Endothelial cell of umbilical vein (primary cell): ENCODE measurements at regions of chr19 and their contacts with region 1.

Region 1: GRCh38 chr19:55467236-55468053 is 2.9 kb upstream of the C19orf85 start:
- DNase-seq: peak; percentile 38
- H3K4me3 ChIP-seq: no peak overlapping the region
- H3K27ac ChIP-seq: no peak overlapping the region
- H3K4me1 ChIP-seq: no peaks in the 10 kb centered on the region
- H3K27me3 ChIP-seq: no peaks in the 10 kb centered on the region
- CTCF ChIP-seq: peak; percentile 97 to 99
- POLR2A ChIP-seq: no peak

Region 2: DNA sequence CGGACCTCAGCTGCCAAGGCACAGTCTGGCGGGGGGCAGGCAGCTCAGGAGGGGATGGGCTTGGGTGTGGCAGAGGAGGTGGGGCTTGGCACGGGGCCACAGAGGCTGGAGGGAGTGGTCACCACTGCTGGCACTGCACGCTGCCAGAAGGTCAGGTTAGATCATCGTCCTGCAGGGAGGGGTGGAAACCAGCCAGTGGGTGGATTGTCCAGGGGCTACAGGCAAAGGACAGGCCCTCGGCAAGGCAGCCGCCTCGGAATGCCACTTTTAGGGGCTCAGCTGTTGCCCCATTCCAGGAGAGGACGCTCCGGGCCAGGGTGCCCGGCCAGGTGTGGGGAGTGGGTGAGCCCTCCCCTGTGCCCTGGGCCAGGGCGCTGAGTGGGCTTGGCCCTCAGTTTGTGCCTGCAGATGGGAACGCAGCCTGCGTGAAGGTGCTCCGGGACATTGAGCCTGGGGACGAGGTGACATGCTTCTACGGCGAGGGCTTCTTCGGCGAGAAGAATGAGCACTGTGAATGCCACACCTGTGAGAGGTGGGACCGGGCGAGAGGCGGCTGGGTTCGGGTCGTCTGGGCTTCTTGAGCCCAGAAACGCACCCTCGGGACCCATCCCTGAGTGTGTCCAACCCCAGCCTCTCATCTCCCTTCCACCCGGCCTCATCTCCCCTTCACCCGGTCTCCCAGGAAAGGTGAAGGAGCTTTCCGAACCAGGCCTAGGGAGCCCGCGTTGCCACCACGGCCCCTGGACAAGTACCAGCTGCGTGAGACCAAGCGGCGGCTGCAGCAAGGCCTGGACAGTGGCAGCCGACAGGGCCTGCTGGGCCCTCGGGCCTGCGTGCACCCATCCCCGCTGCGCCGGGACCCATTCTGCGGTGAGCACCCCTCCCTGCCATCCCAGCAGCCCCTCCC is 121.4 kb before region 1 on chr19:
- CTCF ChIA-PET with region 1: no interaction called
- POLR2A ChIA-PET with region 1: no interaction called
- dilution Hi-C with region 1: no loop called
- intact Hi-C with region 1: no loop called
- DNase-seq: no peak
- H3K4me3 ChIP-seq: no peak overlapping the region
- H3K27ac ChIP-seq: no peak overlapping the region
- H3K4me1 ChIP-seq: no peaks in the 10 kb centered on the region
- H3K27me3 ChIP-seq: no peaks in the 10 kb centered on the region
- CTCF ChIP-seq: no peak
- POLR2A ChIP-seq: no peak

Region 3: GRCh38 chr19:55452749-55453346 is 14.6 kb before region 1 on chr19:
- CTCF ChIA-PET with region 1: interaction called, 13 read pairs
- POLR2A ChIA-PET with region 1: no interaction called
- dilution Hi-C with region 1: no loop called
- intact Hi-C with region 1: no loop called
- DNase-seq: peak; percentile 59
- H3K4me3 ChIP-seq: no peak overlapping the region
- H3K27ac ChIP-seq: no peak overlapping the region
- H3K4me1 ChIP-seq: no peaks in the 10 kb centered on the region
- H3K27me3 ChIP-seq: peaks cover 11 to 21% of the 10 kb centered on the region in 2 experiments
- CTCF ChIP-seq: no peak
- POLR2A ChIP-seq: no peak

Region 4: DNA sequence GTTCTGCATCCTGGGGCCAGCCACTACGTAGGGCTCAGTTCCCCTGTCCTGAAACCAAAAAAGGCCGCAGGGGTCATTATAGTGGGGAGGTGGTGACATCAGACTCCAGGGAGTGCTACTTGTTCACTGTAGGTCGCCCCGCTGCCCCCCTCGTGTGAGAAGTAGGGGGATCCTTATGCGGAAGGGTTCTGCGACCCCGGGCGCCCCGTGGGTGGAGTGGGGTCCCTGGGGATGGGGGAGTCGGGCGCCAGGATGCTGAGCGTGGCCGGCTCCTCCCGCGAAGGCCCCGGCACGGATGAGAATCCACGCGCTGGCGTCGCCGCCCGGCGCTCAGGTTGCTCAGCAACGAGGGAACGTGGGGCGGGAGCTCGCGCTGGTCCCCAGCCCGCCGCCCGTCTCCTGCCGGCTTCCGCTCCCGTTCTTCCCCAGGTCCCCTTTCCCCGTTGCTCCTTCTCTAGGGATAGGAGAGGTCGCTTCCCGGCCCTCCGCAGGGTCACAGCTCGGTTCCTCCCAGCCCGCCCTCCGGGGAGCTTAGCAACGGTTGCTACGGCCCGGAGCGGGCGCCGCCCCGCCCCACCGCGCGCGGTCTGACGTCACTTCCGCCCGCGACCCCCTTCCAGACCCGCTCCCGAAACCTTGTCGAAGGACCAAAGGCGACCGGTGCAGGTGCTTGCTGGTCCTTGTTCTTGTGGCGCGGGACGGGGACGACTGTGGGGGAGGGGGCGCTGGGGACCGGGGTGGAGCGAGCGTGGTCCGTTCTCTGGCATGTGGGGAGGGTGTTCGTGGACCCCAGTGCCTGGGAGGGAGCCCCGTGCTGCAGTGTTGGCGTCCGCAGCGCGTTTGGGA is 17.4 kb after region 1 on chr19 and contains the start of gene NAT14:
- CTCF ChIA-PET with region 1: interaction called, 71 read pairs
- POLR2A ChIA-PET with region 1: no interaction called
- dilution Hi-C with region 1: no loop called
- intact Hi-C with region 1: loop called (anchors 2 kb)
- DNase-seq: peak; percentile 61
- H3K4me3 ChIP-seq: peak within 1 kb of the TSS; percentile 32 to 63 (median 63)
- H3K27ac ChIP-seq: peak within 1 kb of the TSS; percentile 92
- H3K4me1 ChIP-seq: peaks cover 34% of the 10 kb centered on the region
- H3K27me3 ChIP-seq: no peaks in the 10 kb centered on the region
- CTCF ChIP-seq: no peak
- POLR2A ChIP-seq: no peak
- total RNA-seq, gene NAT14: 34.4 and 44.7 TPM in 2 replicates

Region 5: DNA sequence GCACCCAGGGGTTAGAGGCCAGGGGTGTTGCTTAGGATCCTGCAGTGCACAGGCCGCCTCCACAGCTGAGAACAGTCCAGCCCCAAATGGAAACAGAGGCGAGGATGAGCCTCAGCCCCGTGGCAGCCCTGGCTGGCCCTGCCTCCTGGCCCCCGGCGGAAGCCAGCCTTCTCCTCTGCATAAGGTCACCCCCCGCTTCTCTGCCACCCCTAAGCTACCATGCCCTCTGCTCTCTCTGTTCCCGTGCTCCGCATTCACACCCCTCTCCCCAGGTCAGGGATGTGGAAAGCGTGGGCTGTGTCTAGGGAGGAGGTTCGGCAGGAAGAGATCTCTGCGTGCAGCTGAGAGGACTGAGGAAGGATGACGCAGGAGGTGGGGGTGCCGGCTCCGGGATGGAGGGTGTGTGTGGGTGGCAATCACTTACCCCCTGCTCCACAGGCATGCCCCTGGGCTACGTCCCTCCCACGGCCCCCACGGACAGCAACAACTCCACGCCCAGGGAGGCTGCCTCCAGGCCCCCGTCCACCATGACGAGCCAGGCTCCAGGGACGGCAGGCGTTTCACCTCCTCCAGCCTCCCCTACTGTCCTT is 26.8 kb after region 1 on chr19:
- CTCF ChIA-PET with region 1: interaction called, 22 read pairs
- POLR2A ChIA-PET with region 1: no interaction called
- dilution Hi-C with region 1: no loop called
- intact Hi-C with region 1: no loop called
- DNase-seq: no peak
- H3K4me3 ChIP-seq: no peak overlapping the region
- H3K27ac ChIP-seq: no peak overlapping the region
- H3K4me1 ChIP-seq: no peaks in the 10 kb centered on the region
- H3K27me3 ChIP-seq: no peaks in the 10 kb centered on the region
- CTCF ChIP-seq: no peak
- POLR2A ChIP-seq: no peak

Region 6: DNA sequence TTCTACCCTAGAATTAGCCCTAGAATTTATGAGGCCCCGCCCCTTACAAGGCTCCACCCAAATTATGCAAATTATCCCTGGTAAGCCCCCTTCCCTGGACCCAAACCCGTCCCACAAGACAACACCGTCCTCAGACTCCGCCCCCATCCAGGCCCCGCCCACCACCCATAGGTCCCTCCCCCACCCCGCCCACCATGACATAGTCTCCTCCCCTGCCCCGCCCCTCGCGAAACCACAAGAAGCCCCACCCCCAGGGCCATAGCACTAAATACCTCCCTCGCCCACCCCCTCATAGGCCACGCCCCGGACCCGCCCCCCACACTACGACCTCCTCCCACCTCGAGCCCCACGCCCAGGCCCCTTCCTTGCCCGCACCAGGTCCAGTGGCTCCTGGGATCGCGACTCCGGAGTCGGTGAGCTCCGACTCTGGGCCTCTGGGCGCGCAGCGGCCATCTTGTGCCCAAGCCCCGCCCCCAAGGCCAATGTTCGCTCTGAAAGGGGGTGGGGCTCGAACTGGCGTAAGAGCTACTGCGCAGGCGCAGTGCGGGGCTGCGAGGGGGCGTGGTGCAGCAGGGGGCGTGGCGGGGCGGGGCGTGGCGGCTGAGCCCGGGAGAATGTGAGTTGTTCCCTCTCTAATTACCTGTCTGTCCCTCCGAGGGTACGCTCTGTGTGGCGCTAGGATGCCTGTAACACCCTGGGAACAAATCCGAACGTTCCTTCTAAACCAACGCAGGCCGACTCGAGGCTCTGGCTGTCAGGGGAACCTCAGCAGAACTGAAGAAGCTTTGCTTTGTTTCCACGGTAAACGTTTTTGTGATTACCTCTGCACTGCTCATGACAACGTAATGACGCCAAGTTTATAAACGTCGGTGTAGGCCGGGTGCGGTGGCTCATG is 156.9 kb after region 1 on chr19 and contains the start of gene ZNF784:
- CTCF ChIA-PET with region 1: interaction called, 15 read pairs
- POLR2A ChIA-PET with region 1: no interaction called
- dilution Hi-C with region 1: no loop called
- intact Hi-C with region 1: no loop called
- DNase-seq: peak; percentile 92
- H3K4me3 ChIP-seq: peak within 1 kb of the TSS; percentile 58 to 78 (median 74)
- H3K27ac ChIP-seq: peak within 1 kb of the TSS; percentile 54
- H3K4me1 ChIP-seq: peaks cover 6% of the 10 kb centered on the region
- H3K27me3 ChIP-seq: no peaks in the 10 kb centered on the region
- CTCF ChIP-seq: no peak
- POLR2A ChIP-seq: peak; percentile 80
- total RNA-seq, gene ZNF784: 4.9 and 7.1 TPM in 2 replicates